GM12878 (cell line): ENCODE measurements at regions of chr5 and their contacts with region 1.

Region 1: GRCh38 chr5:79241535-79241979 is 5.6 kb downstream of the JMY start:
- DNase-seq: no peak
- ATAC-seq: peak; percentile 24
- H3K4me3 ChIP-seq: peak overlapping the region; percentile 9; the same call in 1 of the 2 replicates
- H3K27ac ChIP-seq: peak overlapping the region; percentile 4; the same call in 1 of the 2 replicates
- H3K4me1 ChIP-seq: peaks cover 8% of the 10 kb centered on the region
- H3K27me3 ChIP-seq: no peaks in the 10 kb centered on the region
- CTCF ChIP-seq: no peak
- EP300 ChIP-seq: no peak
- POLR2A ChIP-seq: no peak
- RAD21 ChIP-seq: no peak

Region 2: GRCh38 chr5:78993165-78993564 is 248.4 kb before region 1 on chr5:
- CTCF ChIA-PET with region 1: no interaction called
- POLR2A ChIA-PET with region 1: no interaction called
- RAD21 ChIA-PET with region 1: no interaction called
- SMC1A ChIA-PET with region 1: no interaction called
- in situ Hi-C with region 1: no loop called
- intact Hi-C with region 1: no loop called
- DNase-seq: no peak
- ATAC-seq: peak; percentile 86
- H3K4me3 ChIP-seq: no peak overlapping the region
- H3K27ac ChIP-seq: no peak overlapping the region
- H3K4me1 ChIP-seq: peaks cover 4% of the 10 kb centered on the region; the same call in 1 of the 2 replicates
- H3K27me3 ChIP-seq: no peaks in the 10 kb centered on the region
- CTCF ChIP-seq: no peak
- EP300 ChIP-seq: no peak
- POLR2A ChIP-seq: no peak
- RAD21 ChIP-seq: no peak

Region 3: DNA sequence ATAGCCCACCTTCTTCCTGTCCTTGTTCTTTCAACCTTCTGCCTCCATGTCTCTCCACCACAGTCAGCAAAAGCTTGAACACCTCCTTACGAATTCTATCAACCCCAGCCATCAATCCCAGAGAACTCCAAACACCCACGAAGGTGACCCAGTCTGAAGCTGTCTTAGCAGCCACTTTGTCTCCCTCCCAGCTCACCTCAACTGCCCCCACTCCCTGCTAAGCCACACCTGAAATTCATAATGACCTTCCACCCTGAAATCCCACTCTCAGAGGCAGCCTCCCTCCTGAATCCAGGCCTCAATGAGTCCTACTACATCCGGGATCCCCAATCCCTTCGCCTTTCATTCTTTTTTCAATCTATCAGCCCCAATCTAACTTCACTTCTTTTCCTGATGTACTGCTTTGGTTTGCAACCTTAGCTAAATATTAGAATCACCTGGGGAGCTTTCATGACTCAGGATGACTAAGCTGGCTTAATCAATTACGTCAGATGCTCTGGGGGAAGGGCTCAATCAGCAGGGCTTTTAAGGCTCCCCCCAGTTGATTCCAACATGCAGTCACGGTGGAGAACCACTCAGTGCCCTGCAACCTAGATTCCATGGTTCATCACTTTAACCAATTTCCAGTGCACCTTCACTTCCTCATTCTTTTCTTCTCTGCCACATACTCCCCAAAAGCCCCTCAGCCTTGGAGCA is 97.7 kb before region 1 on chr5:
- CTCF ChIA-PET with region 1: no interaction called
- POLR2A ChIA-PET with region 1: no interaction called
- RAD21 ChIA-PET with region 1: no interaction called
- SMC1A ChIA-PET with region 1: no interaction called
- in situ Hi-C with region 1: no loop called
- intact Hi-C with region 1: no loop called
- DNase-seq: no peak
- ATAC-seq: no peak
- H3K4me3 ChIP-seq: no peak overlapping the region
- H3K27ac ChIP-seq: no peak overlapping the region
- H3K4me1 ChIP-seq: no peaks in the 10 kb centered on the region
- H3K27me3 ChIP-seq: no peaks in the 10 kb centered on the region; a peak in 1 of 4 replicates
- CTCF ChIP-seq: no peak
- EP300 ChIP-seq: no peak
- POLR2A ChIP-seq: no peak
- RAD21 ChIP-seq: no peak

Region 4: DNA sequence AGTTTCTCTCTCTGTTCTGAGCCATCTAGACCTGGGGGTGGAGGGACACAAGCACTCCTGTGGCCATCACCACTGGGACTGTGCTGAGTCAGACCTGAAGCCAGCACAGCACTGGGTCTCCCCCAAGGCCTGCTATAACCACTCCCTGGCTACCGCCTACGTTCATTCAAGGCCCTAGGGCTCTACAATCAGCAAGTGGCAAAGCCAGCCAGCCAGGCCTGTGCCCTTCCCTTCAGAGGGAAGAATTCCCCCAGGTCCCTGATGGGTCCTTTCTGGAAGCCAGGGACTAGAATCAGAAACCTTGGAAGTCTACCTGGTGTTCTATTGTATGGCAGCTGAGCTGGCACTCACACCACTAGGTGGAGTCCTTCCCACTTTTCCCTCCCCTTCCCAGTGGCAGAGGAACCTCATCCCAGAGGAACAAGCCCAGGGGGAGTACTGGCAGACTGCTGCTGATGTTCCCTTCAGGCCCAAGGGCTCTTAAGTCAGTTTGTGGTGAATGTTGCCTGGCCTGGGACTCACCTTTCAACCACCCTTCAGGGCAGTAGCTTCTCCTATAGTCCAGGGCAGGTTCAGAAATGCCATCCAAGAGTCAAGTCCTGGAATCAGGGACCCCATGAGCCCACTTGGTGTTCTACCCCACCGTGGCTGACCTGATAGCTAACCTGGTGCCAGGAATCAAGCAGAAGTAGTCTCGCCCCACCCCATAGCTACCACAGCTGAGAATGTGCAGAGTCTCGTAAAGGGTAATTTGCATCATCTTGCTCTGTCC is 14.4 kb after region 1 on chr5:
- CTCF ChIA-PET with region 1: interaction called, 11 read pairs
- POLR2A ChIA-PET with region 1: interaction called, 4 read pairs
- RAD21 ChIA-PET with region 1: no interaction called
- SMC1A ChIA-PET with region 1: interaction called, 9 read pairs
- in situ Hi-C with region 1: no loop called
- intact Hi-C with region 1: no loop called
- DNase-seq: no peak
- ATAC-seq: peak; percentile 90
- H3K4me3 ChIP-seq: no peak overlapping the region
- H3K27ac ChIP-seq: no peak overlapping the region
- H3K4me1 ChIP-seq: peaks cover 17% of the 10 kb centered on the region
- H3K27me3 ChIP-seq: no peaks in the 10 kb centered on the region
- CTCF ChIP-seq: peak; percentile 40 to 57 (median 56)
- EP300 ChIP-seq: no peak
- POLR2A ChIP-seq: no peak
- RAD21 ChIP-seq: 0 out of 2 replicates have a peak, but pooled peaks have one; percentile 23

Region 5: GRCh38 chr5:79436224-79436623 is 194.7 kb after region 1 on chr5:
- CTCF ChIA-PET with region 1: no interaction called
- POLR2A ChIA-PET with region 1: no interaction called
- RAD21 ChIA-PET with region 1: no interaction called
- SMC1A ChIA-PET with region 1: no interaction called
- in situ Hi-C with region 1: no loop called
- intact Hi-C with region 1: no loop called
- DNase-seq: no peak
- ATAC-seq: no peak
- H3K4me3 ChIP-seq: no peak overlapping the region
- H3K27ac ChIP-seq: no peak overlapping the region
- H3K4me1 ChIP-seq: no peaks in the 10 kb centered on the region
- H3K27me3 ChIP-seq: no peaks in the 10 kb centered on the region
- CTCF ChIP-seq: no peak
- EP300 ChIP-seq: no peak
- POLR2A ChIP-seq: no peak
- RAD21 ChIP-seq: no peak